Transverse colon (tissue), 4 donors: ENCODE measurements at regions of chr4 and their contacts with region 1.

Region 1: DNA sequence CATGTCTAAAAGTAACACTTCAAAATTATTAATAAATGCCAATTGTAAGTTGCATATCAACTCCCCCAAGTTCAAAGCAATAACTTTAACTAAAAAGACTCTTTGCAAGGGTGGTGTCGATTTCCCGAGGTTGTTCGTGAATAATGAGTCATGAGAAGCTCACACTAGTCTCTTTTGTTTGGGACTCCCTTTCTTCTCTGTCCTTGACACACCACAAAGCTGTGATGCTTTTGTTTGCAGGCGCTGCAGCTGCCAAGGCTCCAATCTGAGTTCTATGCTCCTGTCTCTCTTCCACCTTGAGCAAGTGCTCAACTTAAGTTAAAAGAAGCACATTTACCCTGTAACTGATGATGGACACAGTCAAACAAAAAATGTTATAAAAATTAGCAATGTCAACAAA is 65.9 kb downstream of the FAT1 start:
- DNase-seq: no peak
- H3K4me3 ChIP-seq: no peak overlapping the region
- H3K27ac ChIP-seq: peak overlapping the region in 1 of 4 donors; percentile 79
- H3K4me1 ChIP-seq: peaks cover 3 to 40% (median 27%) of the 10 kb centered on the region in 4 donors
- H3K27me3 ChIP-seq: no peaks in the 10 kb centered on the region
- CTCF ChIP-seq: no peak
- EP300 ChIP-seq: no peak
- POLR2A ChIP-seq: no peak

Region 2: DNA sequence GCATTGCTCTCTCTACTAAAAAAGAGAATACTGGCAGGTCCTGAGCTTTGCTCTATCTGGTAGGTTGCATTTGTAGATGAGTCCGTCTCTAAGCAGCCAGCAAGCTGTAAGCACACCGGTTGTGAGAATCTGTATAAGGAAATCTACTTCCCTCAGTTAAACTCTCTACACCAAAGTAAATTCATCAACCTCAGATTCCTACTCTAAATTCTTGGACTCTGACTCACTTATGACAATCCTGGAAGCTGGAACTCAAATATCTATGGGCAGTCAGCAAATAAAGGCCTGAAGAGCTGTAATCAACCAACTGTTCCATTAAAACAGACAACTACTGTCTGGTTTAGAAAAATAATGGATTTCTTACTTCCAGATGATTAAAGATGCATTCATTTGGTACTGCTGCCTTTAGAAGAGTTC is 28.0 kb after region 1 on chr4:
- in situ Hi-C with region 1: no loop called
- intact Hi-C with region 1: loop called (anchors 1 kb)
- DNase-seq: no peak
- H3K4me3 ChIP-seq: no peak overlapping the region
- H3K27ac ChIP-seq: peak overlapping the region; percentile 53 to 67 (median 59)
- H3K4me1 ChIP-seq: peaks cover 0 to 52% (median 21%) of the 10 kb centered on the region in 4 donors
- H3K27me3 ChIP-seq: no peaks in the 10 kb centered on the region
- CTCF ChIP-seq: no peak
- EP300 ChIP-seq: no peak
- POLR2A ChIP-seq: no peak